MCF 10A (cell line): ENCODE measurements at regions of chr4 and their contacts with region 1.

Region 1: GRCh38 chr4:112765317-112765975 is 128.5 kb downstream of the LARP7 start:
- DNase-seq: peak; percentile 11
- H3K4me3 Mint-ChIP-seq: no peak overlapping the region
- H3K27ac Mint-ChIP-seq: no peak overlapping the region
- H3K4me1 Mint-ChIP-seq: no peaks in the 10 kb centered on the region
- H3K27me3 Mint-ChIP-seq: no peaks in the 10 kb centered on the region
- CTCF ChIP-seq: peak; percentile 25

Region 2: DNA sequence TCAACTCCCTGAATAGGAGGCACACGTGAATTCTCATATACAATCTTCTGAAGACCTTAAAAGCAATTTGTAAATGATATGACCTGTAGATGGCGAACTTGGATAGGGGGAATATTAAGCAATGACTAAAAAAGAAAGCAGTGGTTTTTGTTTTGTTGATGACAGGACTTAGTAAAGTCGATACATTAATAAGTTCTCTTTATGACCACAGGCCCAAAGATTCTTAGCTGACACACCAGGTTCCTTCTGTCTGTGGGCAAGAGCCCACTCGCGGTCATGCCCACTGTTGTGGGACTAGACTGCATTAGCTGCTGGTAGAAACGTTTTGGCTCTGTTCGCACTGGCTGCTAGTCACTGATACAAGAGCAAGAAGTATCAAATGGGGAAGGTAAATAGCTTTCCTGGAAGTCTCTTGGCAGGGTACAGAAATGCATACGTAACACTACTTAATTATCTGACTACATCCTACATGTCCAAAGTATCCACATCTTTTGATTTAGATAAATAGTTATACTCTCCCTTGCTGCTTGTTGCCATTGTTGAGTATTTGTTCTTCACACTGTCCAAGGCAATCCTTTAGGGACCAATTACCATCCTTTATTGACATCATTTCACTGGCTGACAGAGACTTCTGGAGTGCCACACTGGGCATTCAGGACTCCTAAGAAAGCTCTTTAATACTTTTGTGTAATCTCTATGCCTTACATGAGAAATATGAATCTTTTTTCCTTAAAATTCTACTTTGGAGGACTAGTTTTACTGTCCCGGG is 437.3 kb before region 1 on chr4:
- CTCF ChIA-PET with region 1: interaction called, 7 read pairs
- POLR2A ChIA-PET with region 1: no interaction called
- intact Hi-C with region 1: loop called (anchors 10 kb)
- DNase-seq: peak; percentile 60
- H3K4me3 Mint-ChIP-seq: no peak overlapping the region
- H3K27ac Mint-ChIP-seq: no peak overlapping the region
- H3K4me1 Mint-ChIP-seq: no peaks in the 10 kb centered on the region
- H3K27me3 Mint-ChIP-seq: no peaks in the 10 kb centered on the region
- CTCF ChIP-seq: peak; percentile 42

Region 3: DNA sequence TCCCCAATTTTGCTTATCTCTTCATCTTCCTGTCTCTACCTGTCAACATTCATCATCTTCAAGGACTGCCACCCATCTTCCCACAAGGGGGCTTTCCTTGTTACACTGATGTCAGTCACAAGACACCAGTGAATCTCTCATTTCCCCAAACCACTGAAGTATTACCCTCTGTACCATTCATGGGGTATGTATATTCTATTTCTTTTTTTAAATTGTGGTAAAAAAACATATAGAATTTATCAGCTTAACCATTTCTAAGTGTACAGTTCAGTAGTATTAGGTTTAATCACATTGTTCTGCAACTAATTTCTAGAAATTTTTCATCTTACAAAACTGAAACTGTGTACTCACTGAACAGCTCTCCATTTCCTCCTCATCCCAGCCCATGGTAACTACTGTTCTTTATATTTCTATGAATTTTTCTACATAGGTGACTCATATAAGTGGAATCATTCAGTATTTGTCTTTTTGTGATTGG is 29.9 kb before region 1 on chr4:
- CTCF ChIA-PET with region 1: interaction called, 11 read pairs
- POLR2A ChIA-PET with region 1: no interaction called
- intact Hi-C with region 1: no loop called
- DNase-seq: no peak
- H3K4me3 Mint-ChIP-seq: no peak overlapping the region
- H3K27ac Mint-ChIP-seq: no peak overlapping the region
- H3K4me1 Mint-ChIP-seq: no peaks in the 10 kb centered on the region
- H3K27me3 Mint-ChIP-seq: no peaks in the 10 kb centered on the region
- CTCF ChIP-seq: no peak

Region 4: GRCh38 chr4:112775801-112776200 is 10.4 kb after region 1 on chr4:
- CTCF ChIA-PET with region 1: interaction called, 91 read pairs
- POLR2A ChIA-PET with region 1: no interaction called
- intact Hi-C with region 1: no loop called
- DNase-seq: peak; percentile 11
- H3K4me3 Mint-ChIP-seq: no peak overlapping the region
- H3K27ac Mint-ChIP-seq: no peak overlapping the region
- H3K4me1 Mint-ChIP-seq: peaks cover 5% of the 10 kb centered on the region
- H3K27me3 Mint-ChIP-seq: no peaks in the 10 kb centered on the region
- CTCF ChIP-seq: no peak

Region 5: GRCh38 chr4:112817933-112818593 is 52.6 kb after region 1 on chr4:
- CTCF ChIA-PET with region 1: interaction called, 19 read pairs
- POLR2A ChIA-PET with region 1: no interaction called
- intact Hi-C with region 1: no loop called
- DNase-seq: peak; percentile 86
- H3K4me3 Mint-ChIP-seq: peak overlapping the region; percentile 86
- H3K27ac Mint-ChIP-seq: peak overlapping the region; percentile 30
- H3K4me1 Mint-ChIP-seq: peaks cover 19% of the 10 kb centered on the region
- H3K27me3 Mint-ChIP-seq: no peaks in the 10 kb centered on the region
- CTCF ChIP-seq: no peak

Region 6: GRCh38 chr4:112951362-112952312 is 186.2 kb after region 1 on chr4:
- CTCF ChIA-PET with region 1: interaction called, 15 read pairs
- POLR2A ChIA-PET with region 1: no interaction called
- intact Hi-C with region 1: no loop called
- DNase-seq: peak; percentile 21
- H3K4me3 Mint-ChIP-seq: no peak overlapping the region
- H3K27ac Mint-ChIP-seq: no peak overlapping the region
- H3K4me1 Mint-ChIP-seq: no peaks in the 10 kb centered on the region
- H3K27me3 Mint-ChIP-seq: no peaks in the 10 kb centered on the region
- CTCF ChIP-seq: peak; percentile 18